ENCODE measurements at regions of chr1 and their contacts with region 1.

Region 1: DNA sequence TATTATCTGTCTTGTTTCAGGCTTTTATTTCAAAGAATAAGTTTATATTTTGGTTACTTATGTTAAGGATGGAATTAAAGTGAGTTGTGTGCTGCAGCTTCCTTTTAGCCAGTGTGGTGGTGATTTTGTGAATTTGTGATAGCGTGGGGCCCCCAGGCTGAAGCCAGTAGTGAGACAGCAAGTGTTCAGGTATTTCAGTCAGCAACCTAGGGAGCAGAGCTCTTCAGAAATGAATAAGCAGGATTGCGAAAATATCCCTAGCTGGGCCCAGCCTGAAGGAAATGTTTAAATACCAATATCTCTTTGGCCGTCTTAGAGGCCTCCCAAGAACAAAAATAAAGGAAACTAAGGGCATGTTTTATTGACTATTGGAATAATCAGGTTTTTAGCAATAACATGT is 150.8 kb upstream of the C1orf105 start:
- DNase-seq: no peak
- H3K4me3 Mint-ChIP-seq: no peak overlapping the region
- H3K27ac Mint-ChIP-seq: peak overlapping the region; percentile 67
- H3K4me1 Mint-ChIP-seq: peaks cover 64% of the 10 kb centered on the region
- H3K27me3 Mint-ChIP-seq: no peaks in the 10 kb centered on the region

Region 2: GRCh38 chr1:171595324-171595723 is 674.3 kb before region 1 on chr1:
- intact Hi-C with region 1: no loop called
- DNase-seq: no peak
- H3K4me3 Mint-ChIP-seq: no peak overlapping the region
- H3K27ac Mint-ChIP-seq: no peak overlapping the region
- H3K4me1 Mint-ChIP-seq: no peaks in the 10 kb centered on the region
- H3K27me3 Mint-ChIP-seq: no peaks in the 10 kb centered on the region

Region 3: DNA sequence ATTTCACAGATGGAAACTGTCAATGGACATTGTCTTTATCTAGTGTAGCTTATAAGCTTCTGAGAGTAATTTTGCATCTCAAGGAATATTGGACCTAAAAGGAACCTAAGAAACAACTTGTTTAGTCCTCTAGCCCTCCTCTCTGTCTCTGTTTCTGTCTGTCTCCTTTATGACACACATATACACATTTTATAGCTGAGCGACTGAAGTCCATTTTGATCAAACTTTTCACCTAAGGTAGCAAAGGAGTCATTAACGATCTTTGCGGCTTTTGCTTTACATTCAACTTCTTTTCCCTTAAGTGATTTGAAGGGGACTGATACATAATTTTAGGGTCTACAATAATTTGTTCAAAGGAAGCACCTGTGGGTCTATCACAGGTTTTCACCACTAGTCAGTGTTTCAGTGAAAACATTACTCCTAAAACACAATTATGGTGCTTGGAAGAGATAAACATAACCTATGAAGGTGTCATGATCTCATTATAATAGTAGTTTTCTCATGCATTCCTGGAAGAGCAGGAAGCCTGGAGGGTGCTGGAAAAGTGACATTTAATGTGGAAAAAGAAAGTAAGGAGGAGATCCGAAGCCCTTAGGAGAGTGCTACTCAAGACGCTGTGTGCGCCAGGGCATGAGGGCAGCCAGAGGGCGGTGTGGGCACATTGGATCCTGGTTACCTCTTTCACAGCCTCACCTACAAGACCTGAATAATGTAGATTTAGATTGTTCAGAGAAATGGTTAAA is 179.7 kb before region 1 on chr1:
- intact Hi-C with region 1: loop called (anchors 5 kb)
- DNase-seq: peak; percentile 27
- H3K4me3 Mint-ChIP-seq: no peak overlapping the region
- H3K27ac Mint-ChIP-seq: no peak overlapping the region
- H3K4me1 Mint-ChIP-seq: peaks cover 7% of the 10 kb centered on the region
- H3K27me3 Mint-ChIP-seq: peaks cover 7% of the 10 kb centered on the region

Region 4: GRCh38 chr1:172180501-172181285 is 89.0 kb before region 1 on chr1:
- intact Hi-C with region 1: loop called (anchors 1 kb)
- DNase-seq: peak; percentile 40
- H3K4me3 Mint-ChIP-seq: peak overlapping the region; percentile 77
- H3K27ac Mint-ChIP-seq: peak overlapping the region; percentile 97
- H3K4me1 Mint-ChIP-seq: peaks cover 42% of the 10 kb centered on the region
- H3K27me3 Mint-ChIP-seq: no peaks in the 10 kb centered on the region

Region 5: DNA sequence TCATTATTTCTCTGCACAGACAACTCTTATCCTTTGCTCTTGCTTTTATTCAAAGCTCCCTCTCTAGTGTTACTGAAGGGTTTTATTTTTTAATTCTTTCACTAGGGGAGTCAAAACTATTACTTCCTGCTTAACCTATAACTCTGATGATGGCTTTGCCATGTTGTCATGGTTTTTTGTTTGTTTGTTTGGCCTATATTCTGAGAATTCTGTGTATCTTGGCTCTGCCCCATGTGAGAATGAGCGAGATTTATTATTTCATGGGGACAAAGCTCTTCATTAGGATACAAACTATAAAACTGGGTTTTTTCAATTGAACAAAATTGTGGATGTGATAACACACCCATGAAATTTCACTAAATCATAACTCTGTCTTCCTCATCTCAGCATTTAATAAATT is 39.7 kb before region 1 on chr1:
- intact Hi-C with region 1: no loop called
- DNase-seq: no peak
- H3K4me3 Mint-ChIP-seq: no peak overlapping the region
- H3K27ac Mint-ChIP-seq: no peak overlapping the region
- H3K4me1 Mint-ChIP-seq: peaks cover 4% of the 10 kb centered on the region
- H3K27me3 Mint-ChIP-seq: no peaks in the 10 kb centered on the region

Region 6: DNA sequence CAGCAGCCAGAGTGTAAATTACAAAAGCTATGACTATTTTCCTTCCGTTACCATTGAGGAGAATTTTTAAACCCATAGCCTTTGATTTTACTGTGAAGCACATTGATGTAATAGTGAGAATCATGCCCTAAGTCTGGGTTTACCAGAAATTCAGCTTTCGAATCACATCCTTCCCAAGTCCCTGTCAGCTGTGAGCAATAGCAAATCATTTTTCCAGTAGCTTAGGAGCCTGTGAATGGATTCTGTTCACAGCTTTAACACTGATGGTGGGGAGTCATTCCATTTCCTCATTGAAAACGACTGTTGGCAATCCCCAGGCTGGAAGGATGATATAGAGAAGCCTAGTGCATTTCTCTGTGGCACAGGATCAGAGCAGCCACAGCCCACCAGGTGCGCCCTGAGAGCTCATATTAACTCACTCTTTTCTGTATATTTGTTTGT is 68.7 kb after region 1 on chr1:
- intact Hi-C with region 1: loop called (anchors 1 kb)
- DNase-seq: no peak
- H3K4me3 Mint-ChIP-seq: no peak overlapping the region
- H3K27ac Mint-ChIP-seq: peak overlapping the region; percentile 54
- H3K4me1 Mint-ChIP-seq: peaks cover 44% of the 10 kb centered on the region
- H3K27me3 Mint-ChIP-seq: no peaks in the 10 kb centered on the region

Region 7: GRCh38 chr1:172357753-172358385 is 88.2 kb after region 1 on chr1:
- intact Hi-C with region 1: loop called (anchors 1 kb)
- DNase-seq: no peak
- H3K4me3 Mint-ChIP-seq: no peak overlapping the region
- H3K27ac Mint-ChIP-seq: peak overlapping the region; percentile 82
- H3K4me1 Mint-ChIP-seq: peaks cover 52% of the 10 kb centered on the region
- H3K27me3 Mint-ChIP-seq: no peaks in the 10 kb centered on the region

Region 8: DNA sequence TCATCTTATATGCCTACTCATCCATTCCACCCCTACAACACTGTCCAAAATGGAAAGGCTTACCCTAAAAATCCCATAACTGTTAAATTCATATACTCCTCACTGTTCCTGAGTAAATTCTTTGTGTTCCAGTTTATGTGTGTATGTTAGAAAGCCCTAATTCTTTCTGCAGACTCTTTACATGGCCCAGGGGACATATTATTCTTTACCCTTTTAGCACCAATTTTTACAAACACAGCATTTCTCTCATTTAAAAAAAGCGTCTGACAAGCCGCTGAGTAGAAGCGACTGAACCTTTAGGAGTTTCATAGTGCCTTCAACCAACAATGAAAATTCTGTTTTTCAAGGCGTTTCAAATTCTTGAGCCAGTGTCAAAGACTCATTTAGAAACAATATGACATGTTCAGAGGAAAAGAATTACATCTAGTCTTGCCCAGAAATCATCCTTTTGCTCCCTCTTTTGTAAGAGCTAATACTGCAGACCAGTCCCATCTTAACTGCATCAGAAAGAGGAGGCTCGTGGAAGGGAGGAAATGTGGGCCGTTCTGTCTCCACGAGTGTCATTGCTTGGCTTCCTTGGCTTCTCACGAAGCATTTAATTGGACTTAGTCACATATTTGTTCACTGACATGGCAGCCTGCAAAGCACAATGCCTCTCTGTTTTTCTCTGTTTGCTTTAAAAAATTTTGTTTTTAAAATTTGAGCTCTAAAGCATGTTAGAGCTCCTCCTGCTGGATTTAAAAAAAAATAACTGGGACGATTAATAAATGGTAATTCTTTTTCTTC is 129.5 kb after region 1 on chr1:
- intact Hi-C with region 1: loop called (anchors 1 kb)
- DNase-seq: no peak
- H3K4me3 Mint-ChIP-seq: no peak overlapping the region
- H3K27ac Mint-ChIP-seq: peak overlapping the region; percentile 18
- H3K4me1 Mint-ChIP-seq: peaks cover 45% of the 10 kb centered on the region
- H3K27me3 Mint-ChIP-seq: no peaks in the 10 kb centered on the region